ENCODE measurements at regions of chr1 and their contacts with region 1.

Region 1: GRCh38 chr1:231211005-231211857 is 29.8 kb upstream of the GNPAT start:
- H3K4me3 Mint-ChIP-seq: peak overlapping the region; percentile 92
- H3K27ac Mint-ChIP-seq: peak overlapping the region; percentile 71
- H3K4me1 Mint-ChIP-seq: peaks cover 5% of the 10 kb centered on the region
- H3K27me3 Mint-ChIP-seq: peaks cover 12% of the 10 kb centered on the region

Region 2: GRCh38 chr1:230642263-230642959 is 568.8 kb before region 1 on chr1 and contains the start of gene COG2:
- intact Hi-C with region 1: loop called (anchors 5 kb)
- H3K4me3 Mint-ChIP-seq: peak within 1 kb of the TSS; percentile 98
- H3K27ac Mint-ChIP-seq: peak within 1 kb of the TSS; percentile 94
- H3K4me1 Mint-ChIP-seq: peaks cover 43% of the 10 kb centered on the region
- H3K27me3 Mint-ChIP-seq: peaks cover 14% of the 10 kb centered on the region

Region 3: GRCh38 chr1:230797942-230798418 is 413.3 kb before region 1 on chr1:
- intact Hi-C with region 1: loop called (anchors 5 kb)
- H3K4me3 Mint-ChIP-seq: no peak overlapping the region
- H3K27ac Mint-ChIP-seq: no peak overlapping the region
- H3K4me1 Mint-ChIP-seq: no peaks in the 10 kb centered on the region
- H3K27me3 Mint-ChIP-seq: peaks cover 4% of the 10 kb centered on the region

Region 4: DNA sequence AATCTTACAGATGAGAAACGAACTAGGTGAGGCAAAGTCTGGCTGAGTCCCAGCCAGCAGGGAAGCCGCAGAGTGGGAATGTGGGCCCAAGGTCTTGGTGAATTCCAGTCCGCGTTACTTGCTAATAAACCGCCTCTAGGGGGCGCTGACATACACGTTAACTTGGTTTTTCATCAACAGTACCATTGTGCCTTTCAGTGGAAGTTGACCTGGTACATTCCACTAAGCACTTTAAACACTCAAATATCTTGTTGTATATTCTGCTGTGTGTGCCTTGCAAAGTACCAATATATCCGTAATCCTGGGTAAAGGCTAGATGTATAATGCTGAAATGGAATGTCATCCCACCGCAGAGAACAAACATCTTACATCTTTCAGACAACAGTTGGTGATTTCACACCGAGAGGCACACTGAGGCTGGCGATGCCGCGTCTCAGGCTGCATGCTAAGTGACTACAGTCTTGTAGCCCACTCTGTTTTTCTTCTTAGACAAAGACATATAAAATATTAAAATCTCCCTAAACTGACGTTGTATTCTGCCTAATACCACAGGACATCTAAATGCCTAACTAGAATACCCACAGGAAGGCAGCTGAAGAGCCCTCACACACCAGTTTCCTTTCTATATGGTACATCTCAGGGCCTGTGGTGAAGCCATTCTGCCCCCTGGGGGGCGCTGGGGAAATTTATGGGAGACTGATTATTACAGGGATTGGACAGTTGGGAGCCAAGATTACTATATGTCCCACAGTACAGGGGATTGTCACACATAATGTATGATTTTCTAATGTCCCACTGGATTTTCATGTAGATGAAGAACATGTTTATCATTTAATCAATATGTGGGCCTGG is 293.7 kb before region 1 on chr1:
- intact Hi-C with region 1: loop called (anchors 1 kb)
- H3K4me3 Mint-ChIP-seq: no peak overlapping the region
- H3K27ac Mint-ChIP-seq: no peak overlapping the region
- H3K4me1 Mint-ChIP-seq: no peaks in the 10 kb centered on the region
- H3K27me3 Mint-ChIP-seq: no peaks in the 10 kb centered on the region

Region 5: DNA sequence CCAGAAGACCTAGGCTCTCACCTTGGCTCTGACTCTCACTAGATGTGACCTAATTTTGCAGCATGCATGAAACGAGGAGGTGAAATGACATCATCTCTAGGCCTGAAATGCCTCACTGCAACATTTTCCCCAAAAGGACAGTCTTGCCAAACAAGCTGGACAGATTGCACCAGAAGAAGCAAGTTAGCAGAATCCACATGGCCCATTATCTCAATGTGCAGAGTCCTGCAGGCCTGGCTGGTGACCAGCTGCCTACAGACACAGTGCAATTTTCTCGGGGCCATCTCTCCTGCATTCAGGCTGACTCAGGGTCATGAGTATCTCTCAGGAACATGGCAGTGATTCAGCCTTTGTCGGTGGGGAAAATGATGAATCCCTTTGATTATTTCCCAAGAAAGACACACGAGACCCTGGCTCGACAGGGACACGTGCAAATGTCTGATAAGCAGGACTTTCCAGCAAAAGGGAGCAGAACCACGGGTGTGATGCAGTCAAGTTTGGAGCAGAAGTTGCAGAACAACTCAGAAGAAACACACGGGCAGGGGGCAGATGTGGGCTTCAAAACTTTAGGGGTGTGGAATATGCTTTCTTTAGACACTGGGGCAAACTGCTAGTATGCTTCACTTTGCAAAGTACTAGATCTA is 10.7 kb before region 1 on chr1:
- intact Hi-C with region 1: no loop called
- H3K4me3 Mint-ChIP-seq: no peak overlapping the region
- H3K27ac Mint-ChIP-seq: no peak overlapping the region
- H3K4me1 Mint-ChIP-seq: no peaks in the 10 kb centered on the region
- H3K27me3 Mint-ChIP-seq: peaks cover 40% of the 10 kb centered on the region

Measured in dendritic cell treated with granulocyte-macrophage colony-stimulating factor and Interleukin-4, amounts not matched to agents 40 ng/mL and 50 ng/mL, for 4 days (primary cell).